A549 (cell line): ENCODE measurements at regions of chr3 and their contacts with region 1.

Region 1: DNA sequence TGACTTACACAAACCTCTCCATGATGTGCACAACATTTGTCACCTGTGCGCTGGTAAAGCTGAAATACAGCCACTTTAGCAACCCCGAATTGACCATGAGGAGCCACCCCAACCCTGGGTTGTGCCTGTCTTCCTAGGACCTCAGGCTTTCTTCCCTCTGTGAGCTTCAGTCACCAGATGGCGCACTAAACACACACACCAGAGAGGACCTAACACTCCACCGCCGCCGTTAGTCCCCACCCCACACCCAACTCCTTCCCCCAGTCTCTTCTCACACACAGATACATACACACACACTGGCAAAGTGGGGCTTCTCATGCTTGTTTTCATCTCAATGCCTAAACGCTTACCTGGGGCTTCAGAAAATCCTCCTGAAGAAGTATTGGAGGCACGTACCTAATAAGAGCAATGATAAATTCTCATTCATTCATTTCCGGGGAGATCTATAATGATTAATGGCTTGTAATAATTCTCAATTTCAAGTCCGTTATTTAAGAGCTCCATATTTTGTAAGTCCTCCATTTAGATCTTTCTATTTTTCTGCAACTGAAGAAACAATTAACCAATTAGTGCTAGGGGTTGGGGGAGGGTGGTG is 2.1 kb upstream of the CCDC80 start:
- DNase-seq: peak; percentile 88 to 94
- ATAC-seq: peak; percentile 70 to 84
- H3K4me3 ChIP-seq: 0 out of 3 replicates have a peak overlapping the region, but pooled peaks have one; percentile 20
- H3K27ac ChIP-seq: peak overlapping the region; percentile 90 to 99
- H3K4me1 ChIP-seq: peaks cover 65% of the 10 kb centered on the region
- CTCF ChIP-seq: peak; percentile 96
- EP300 ChIP-seq: no peak
- POLR2A ChIP-seq: no peak
- RAD21 ChIP-seq: peak; percentile 100

Region 2: DNA sequence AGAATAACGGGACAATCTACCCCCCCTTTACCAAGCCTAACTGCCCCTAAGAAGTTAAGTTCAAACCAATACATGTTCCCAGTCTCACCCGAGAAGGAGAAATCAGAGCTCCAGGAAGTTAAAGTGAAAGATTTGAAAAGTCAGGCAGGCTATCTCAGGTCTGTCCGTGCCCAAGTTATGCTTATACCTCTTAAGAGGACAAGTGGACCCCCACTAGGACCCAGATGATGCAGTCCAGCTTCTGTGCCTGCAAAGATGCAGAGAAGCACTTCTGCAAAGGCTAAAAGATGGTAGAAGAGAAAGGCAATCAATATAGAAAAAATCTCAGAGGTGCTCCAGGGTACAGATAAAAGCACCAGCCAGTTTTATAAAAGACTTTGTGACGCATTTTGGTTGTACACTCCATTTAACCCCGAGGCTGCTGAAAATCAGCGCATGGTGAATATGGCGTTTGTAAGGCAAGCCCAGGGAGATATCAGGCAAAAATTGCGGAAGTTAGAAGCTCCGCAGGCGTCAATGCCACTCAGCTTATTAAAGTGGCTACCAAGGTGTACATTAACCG is 339.2 kb before region 1 on chr3:
- CTCF ChIA-PET with region 1: no interaction called
- POLR2A ChIA-PET with region 1: no interaction called
- DNase-seq: no peak
- ATAC-seq: no peak
- H3K4me3 ChIP-seq: no peak overlapping the region
- H3K27ac ChIP-seq: no peak overlapping the region
- H3K4me1 ChIP-seq: no peaks in the 10 kb centered on the region
- CTCF ChIP-seq: no peak
- EP300 ChIP-seq: no peak
- POLR2A ChIP-seq: no peak
- RAD21 ChIP-seq: no peak

Region 3: DNA sequence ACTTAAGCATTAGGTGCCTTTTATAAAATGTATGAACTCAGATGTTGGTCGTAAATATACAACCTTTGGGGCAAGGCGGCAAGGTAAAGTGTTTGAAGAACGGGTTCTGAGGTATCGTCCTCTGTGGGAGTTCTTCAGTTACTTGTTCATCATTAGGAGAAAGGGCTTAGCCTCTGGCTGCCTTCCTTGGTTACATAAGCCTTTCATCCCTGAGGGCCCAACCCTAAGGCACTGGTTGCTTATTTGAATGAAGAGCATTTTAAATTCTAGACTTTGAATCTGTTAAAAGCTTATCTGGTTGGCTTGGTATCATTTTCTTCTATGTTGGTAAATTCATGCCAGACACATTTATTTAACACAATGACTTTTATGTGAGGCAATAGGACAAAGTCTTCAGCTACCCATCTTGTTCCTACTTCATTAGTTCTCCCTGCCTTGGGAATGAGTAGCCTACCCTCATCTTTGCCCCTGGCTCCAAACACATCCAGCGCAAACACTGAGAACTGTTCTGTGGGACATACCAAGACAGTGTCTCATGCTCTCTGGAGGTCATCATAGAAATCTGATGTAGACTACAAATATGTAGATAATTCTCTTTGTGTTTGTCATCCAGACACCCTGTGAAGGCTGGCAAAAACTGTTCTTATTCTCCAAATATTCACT is 10.3 kb after region 1 on chr3:
- CTCF ChIA-PET with region 1: interaction called, 65 read pairs
- POLR2A ChIA-PET with region 1: interaction called, 51 read pairs
- DNase-seq: peak; percentile 92 to 97
- ATAC-seq: peak; percentile 96 to 97
- H3K4me3 ChIP-seq: no peak overlapping the region
- H3K27ac ChIP-seq: peak overlapping the region; percentile 92 to 99
- H3K4me1 ChIP-seq: peaks cover 78% of the 10 kb centered on the region
- CTCF ChIP-seq: no peak
- EP300 ChIP-seq: peak; percentile 89 to 93
- POLR2A ChIP-seq: no peak
- RAD21 ChIP-seq: peak; percentile 30 to 52; a peak in 4 of 5 replicates

Region 4: DNA sequence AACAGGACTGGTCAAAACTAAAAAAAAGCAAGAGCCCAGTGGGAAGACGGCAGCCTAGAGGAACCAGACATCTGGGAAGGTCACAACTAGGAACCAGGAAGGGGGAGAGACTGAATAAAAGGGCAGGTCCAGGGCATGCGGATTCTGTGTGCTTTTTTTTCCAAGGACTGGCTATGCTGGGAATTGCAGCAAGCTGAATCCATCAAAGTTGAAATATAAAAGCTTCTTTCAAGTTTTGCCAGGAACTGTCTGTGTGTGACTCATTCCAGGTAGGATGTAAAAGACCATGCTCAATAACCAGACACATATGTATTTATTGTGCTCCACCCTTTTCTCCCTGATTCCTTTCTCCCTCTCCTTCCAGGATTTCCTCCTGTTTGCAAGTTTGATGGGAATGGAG is 45.8 kb after region 1 on chr3:
- CTCF ChIA-PET with region 1: interaction called, 12 read pairs
- POLR2A ChIA-PET with region 1: no interaction called
- DNase-seq: peak in 1 of 2 experiments; percentile 83
- ATAC-seq: peak; percentile 83
- H3K4me3 ChIP-seq: no peak overlapping the region
- H3K27ac ChIP-seq: peak overlapping the region; percentile 87 to 88
- H3K4me1 ChIP-seq: peaks cover 62% of the 10 kb centered on the region
- CTCF ChIP-seq: no peak
- EP300 ChIP-seq: peak; percentile 70 to 77; a peak in 4 of 5 replicates
- POLR2A ChIP-seq: no peak
- RAD21 ChIP-seq: peak in 1 of 2 experiments; percentile 46; a peak in 1 of 5 replicates

Region 5: GRCh38 chr3:112761062-112761638 is 118.1 kb after region 1 on chr3:
- CTCF ChIA-PET with region 1: interaction called, 10 read pairs
- POLR2A ChIA-PET with region 1: no interaction called
- DNase-seq: no peak
- ATAC-seq: no peak
- H3K4me3 ChIP-seq: no peak overlapping the region
- H3K27ac ChIP-seq: peak overlapping the region in 1 of 2 experiments; percentile 9; a peak in 1 of 6 replicates
- H3K4me1 ChIP-seq: peaks cover 18% of the 10 kb centered on the region
- CTCF ChIP-seq: no peak
- EP300 ChIP-seq: no peak
- POLR2A ChIP-seq: no peak
- RAD21 ChIP-seq: no peak

Region 6: DNA sequence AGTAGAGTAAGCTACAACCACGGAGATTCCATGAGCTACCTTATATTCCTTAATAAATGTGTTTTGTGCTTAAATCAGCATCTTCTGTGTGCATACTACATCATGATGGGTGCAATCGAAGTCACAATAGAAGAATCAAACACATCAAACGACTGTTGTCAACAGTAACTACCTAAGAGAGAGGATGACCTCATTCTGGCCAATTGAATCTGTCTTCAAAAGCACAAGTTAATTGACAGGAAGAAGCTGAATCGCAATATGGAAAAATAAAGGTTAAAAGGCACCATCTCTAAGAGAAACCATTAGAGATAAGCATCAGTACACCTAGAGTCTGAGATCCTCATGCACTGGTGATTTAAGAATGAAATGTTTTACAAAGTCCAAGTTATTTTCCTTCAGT is 164.7 kb after region 1 on chr3:
- CTCF ChIA-PET with region 1: interaction called, 147 read pairs
- POLR2A ChIA-PET with region 1: interaction called, 3 read pairs
- DNase-seq: no peak
- ATAC-seq: no peak
- H3K4me3 ChIP-seq: no peak overlapping the region
- H3K27ac ChIP-seq: 0 out of 6 replicates have a peak overlapping the region, but pooled peaks of 1 of the 2 experiments have one; percentile 12
- H3K4me1 ChIP-seq: peaks cover 19% of the 10 kb centered on the region
- CTCF ChIP-seq: no peak
- EP300 ChIP-seq: no peak
- POLR2A ChIP-seq: no peak
- RAD21 ChIP-seq: no peak

Region 7: GRCh38 chr3:112900113-112900512 is 257.1 kb after region 1 on chr3:
- CTCF ChIA-PET with region 1: no interaction called
- POLR2A ChIA-PET with region 1: no interaction called
- DNase-seq: no peak
- ATAC-seq: no peak
- H3K4me3 ChIP-seq: no peak overlapping the region
- H3K27ac ChIP-seq: no peak overlapping the region
- H3K4me1 ChIP-seq: no peaks in the 10 kb centered on the region
- CTCF ChIP-seq: no peak
- EP300 ChIP-seq: no peak
- POLR2A ChIP-seq: no peak
- RAD21 ChIP-seq: no peak

Region 8: DNA sequence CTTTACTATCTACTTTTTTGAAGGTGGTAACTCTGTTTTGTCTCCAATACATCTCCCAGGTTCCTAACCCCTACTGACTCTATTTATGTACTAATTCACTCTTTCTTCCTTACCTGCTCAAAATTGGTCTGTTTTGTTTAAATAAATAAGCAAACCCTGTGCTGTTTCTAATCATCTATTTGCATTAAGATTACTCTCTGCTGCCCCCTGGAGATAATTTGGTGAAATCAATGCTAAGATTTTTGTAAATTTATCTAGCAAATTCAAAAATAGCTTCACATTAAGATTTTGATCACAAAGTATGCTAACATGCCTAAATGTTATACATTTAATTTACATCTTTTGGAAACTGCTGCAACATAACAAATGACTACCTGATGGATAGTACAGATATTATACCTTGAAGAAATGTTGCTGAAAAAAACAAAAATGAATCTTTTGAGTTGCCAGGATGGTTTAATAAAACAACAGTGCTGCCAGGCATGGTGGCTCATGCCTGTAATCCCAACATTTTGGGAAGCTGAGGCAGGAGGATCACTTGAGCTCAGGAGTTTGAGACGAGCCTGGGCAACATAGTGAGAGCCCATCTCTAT is 336.3 kb after region 1 on chr3:
- CTCF ChIA-PET with region 1: interaction called, 64 read pairs
- POLR2A ChIA-PET with region 1: interaction called, 10 read pairs
- DNase-seq: peak; percentile 21 to 42
- ATAC-seq: no peak
- H3K4me3 ChIP-seq: no peak overlapping the region
- H3K27ac ChIP-seq: peak overlapping the region; percentile 2 to 25; a peak in 3 of 6 replicates
- H3K4me1 ChIP-seq: peaks cover 8% of the 10 kb centered on the region; the same call in 1 of the 3 replicates
- CTCF ChIP-seq: peak; percentile 83
- EP300 ChIP-seq: no peak
- POLR2A ChIP-seq: no peak
- RAD21 ChIP-seq: peak; percentile 74 to 83

Region 9: GRCh38 chr3:113287803-113288648 is 645.0 kb after region 1 on chr3:
- CTCF ChIA-PET with region 1: interaction called, 27 read pairs
- POLR2A ChIA-PET with region 1: interaction called, 4 read pairs
- DNase-seq: peak; percentile 58 to 74
- ATAC-seq: peak; percentile 55 to 77
- H3K4me3 ChIP-seq: no peak overlapping the region
- H3K27ac ChIP-seq: peak overlapping the region; percentile 74 to 89
- H3K4me1 ChIP-seq: peaks cover 25% of the 10 kb centered on the region
- CTCF ChIP-seq: peak; percentile 98
- EP300 ChIP-seq: no peak
- POLR2A ChIP-seq: no peak
- RAD21 ChIP-seq: peak; percentile 98 to 99